HepG2 (cell line): ENCODE measurements at regions of chr2 and their contacts with region 1.

Region 1: GRCh38 chr2:238239872-238240751 is at the start of gene HES6:
- DNase-seq: peak; percentile 82
- ATAC-seq: peak; percentile 83
- H3K4me3 ChIP-seq: peak within 1 kb of the TSS; percentile 61 to 85 (median 74)
- H3K27ac ChIP-seq: peak within 1 kb of the TSS; percentile 54
- H3K4me1 ChIP-seq: peaks cover 57% of the 10 kb centered on the region
- H3K27me3 ChIP-seq: no peaks in the 10 kb centered on the region; a peak in 2 of 5 replicates
- CTCF ChIP-seq: no peak; the same call in 1 of the 2 replicates
- EP300 ChIP-seq: 0 out of 4 replicates have a peak, but pooled peaks of 1 of the 2 experiments have one; percentile 13
- POLR2A ChIP-seq: peak in 1 of 2 experiments; percentile 95; a peak in 2 of 4 replicates
- RAD21 ChIP-seq: peak; percentile 82
- total RNA-seq, gene HES6: 59.0 and 82.8 TPM in 2 replicates

Region 2: DNA sequence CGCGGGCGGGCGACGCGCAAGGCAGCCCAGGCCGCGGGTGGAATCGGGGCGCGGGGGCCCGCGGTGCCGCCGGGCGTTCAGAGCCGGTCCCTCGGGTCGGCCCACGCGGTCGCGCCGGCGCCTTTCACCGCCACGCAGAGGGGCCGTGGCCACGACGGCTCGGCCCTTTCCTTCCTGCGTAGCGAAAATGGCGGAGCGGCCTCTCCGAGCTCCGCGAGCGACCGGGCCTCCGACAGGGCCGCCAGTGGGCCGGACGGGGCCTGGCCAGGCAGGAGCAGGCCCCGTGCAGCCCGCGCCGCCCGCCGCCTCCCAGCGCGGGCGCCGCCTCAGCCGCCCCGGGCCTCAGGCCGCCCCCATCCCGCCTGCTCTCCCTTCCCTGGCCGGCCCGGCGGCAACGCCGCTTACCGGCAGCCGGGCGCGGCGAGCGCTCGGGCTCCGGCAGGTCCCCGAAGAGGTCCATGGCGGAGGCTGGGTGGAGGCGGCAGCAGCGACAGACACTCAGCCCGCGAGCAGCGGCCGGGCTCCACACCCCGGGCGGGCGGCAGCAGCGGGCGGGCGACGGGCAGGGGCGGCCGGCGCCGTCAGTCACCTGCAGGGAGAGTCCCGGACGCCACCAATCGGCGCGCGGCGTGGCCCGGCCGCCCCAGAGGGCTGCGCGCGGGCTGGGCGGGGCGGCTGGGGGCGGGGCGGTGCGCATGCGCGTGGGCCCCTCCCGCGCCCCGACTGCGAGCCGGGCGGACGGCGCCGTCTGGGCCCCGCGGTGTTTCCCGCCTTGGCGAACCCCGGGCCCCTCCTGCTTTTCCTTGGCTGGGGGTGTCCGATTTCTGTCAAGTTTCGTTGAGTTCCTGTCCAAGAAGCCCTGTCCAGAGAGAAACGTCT is 36.8 kb before region 1 on chr2 and contains the start of gene ILKAP:
- CTCF ChIA-PET with region 1: interaction called, 3 read pairs
- POLR2A ChIA-PET with region 1: interaction called, 8 read pairs
- in situ Hi-C with region 1: no loop called
- intact Hi-C with region 1: loop called (anchors 5 kb)
- DNase-seq: peak; percentile 75
- ATAC-seq: peak; percentile 99
- H3K4me3 ChIP-seq: peak within 1 kb of the TSS; percentile 72 to 89 (median 81)
- H3K27ac ChIP-seq: peak within 1 kb of the TSS; percentile 59
- H3K4me1 ChIP-seq: peaks cover 44% of the 10 kb centered on the region
- H3K27me3 ChIP-seq: peaks cover 0 to 25% of the 10 kb centered on the region in 2 experiments; a peak in 2 of 5 replicates
- CTCF ChIP-seq: no peak
- EP300 ChIP-seq: no peak
- POLR2A ChIP-seq: peak; percentile 65 to 85
- RAD21 ChIP-seq: peak; percentile 43
- total RNA-seq, gene ILKAP: 28.8 and 33.1 TPM in 2 replicates

Region 3: DNA sequence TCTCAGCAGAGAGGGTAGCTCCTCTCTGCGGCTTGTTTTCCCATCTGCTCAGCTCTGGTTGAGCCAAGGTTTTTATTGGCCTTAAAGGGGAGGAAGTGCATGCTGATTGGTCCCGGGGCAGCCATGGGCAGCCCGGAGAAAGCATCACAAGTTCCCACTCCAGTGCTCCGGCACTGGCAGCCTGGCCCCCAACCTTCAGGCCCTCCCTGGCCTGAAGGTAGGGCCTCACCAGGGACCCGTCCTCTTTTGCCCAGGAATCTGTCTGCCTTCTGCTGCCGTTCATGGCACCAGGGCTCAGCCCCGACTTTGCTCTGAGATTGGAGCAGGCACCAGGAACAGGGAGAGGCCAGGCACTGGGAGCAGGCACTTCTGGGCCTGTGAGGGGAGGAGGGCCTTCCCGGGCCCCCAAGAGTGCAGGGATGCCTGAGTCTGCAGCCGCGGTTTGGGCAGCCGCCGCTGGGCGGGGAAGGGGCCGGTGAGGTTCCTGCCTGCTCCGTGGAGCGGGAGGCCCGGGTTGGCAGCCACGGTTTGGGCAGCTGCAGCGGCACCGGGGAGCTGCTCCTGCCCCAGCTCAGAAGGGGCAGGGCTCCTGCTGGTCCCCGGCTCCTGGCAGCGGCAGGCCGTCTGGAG is 19.1 kb before region 1 on chr2:
- CTCF ChIA-PET with region 1: no interaction called
- POLR2A ChIA-PET with region 1: interaction called, 20 read pairs
- in situ Hi-C with region 1: no loop called
- intact Hi-C with region 1: no loop called
- DNase-seq: peak; percentile 62
- ATAC-seq: peak; percentile 91
- H3K4me3 ChIP-seq: peak overlapping the region; percentile 31 to 67 (median 44); a peak in 5 of 6 replicates
- H3K27ac ChIP-seq: no peak overlapping the region
- H3K4me1 ChIP-seq: peaks cover 42% of the 10 kb centered on the region
- H3K27me3 ChIP-seq: peaks cover 8 to 33% of the 10 kb centered on the region in 2 experiments; a peak in 4 of 5 replicates
- CTCF ChIP-seq: no peak
- EP300 ChIP-seq: no peak
- POLR2A ChIP-seq: peak in 1 of 2 experiments; percentile 48; a peak in 2 of 4 replicates
- RAD21 ChIP-seq: no peak